ENCODE measurements at regions of chr14 and their contacts with region 1.

Region 1: DNA sequence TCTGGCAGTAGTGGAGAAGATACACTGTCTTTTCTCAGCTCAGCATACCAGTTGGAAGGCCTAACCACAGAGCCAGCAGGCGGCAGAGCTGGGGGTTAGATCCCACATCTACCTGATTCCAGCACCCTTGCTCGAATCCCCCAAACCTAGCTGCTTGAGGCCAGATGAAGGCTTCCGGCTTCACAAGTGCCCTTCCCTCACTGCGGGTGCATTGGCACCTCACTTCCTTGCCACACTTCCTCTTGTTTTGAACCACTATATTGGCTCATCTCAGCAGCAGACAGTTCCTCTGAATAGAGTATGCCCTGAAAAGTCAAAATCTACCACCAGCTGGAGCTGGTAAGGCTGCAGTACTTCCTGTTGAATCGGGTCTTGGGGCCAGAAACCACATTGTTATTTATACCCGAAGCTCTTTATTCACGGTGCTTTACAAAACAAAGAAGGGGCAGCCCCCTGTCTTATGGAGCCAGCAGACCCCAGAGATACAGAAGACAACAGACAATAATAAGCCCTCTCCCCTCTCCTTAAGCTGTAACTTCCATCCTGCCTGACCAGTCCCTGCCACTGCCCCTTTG is 233.7 kb downstream of the EFCAB11 start:
- DNase-seq: peak; percentile 89
- H3K4me3 Mint-ChIP-seq: peak overlapping the region; percentile 68
- H3K27ac Mint-ChIP-seq: peak overlapping the region; percentile 91
- H3K4me1 Mint-ChIP-seq: peaks cover 57% of the 10 kb centered on the region
- H3K27me3 Mint-ChIP-seq: no peaks in the 10 kb centered on the region

Region 2: DNA sequence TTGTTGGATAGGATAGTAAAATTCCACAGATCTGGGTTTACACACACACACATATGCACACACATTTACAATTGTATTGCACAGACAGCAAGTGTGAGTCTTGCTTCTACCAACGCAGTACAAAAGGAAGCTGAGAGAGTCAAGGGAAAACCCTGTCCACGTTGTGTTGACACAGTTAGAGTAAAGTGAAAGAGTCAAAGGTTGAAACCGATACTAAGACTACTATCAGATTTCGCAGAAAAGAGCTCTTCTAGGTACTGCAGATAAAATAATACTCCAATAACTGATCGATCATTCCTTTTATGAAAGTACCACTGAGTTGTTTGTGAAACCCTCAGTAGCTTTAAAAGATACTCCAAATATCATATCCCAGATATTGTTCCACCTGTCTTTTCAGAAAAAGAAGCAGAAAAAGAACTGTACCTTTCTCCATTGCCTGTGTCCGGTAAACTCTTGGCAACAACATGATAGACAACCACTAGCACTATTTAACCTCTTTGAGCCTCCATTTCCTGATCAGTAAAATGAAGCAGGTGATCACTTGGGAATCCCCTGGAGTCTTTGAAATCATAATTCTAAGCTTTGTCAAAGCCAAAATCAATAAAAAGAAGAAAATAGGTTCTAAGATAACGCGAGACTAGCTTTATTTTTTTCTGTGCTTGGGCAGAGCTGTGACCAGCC is 79.2 kb before region 1 on chr14:
- intact Hi-C with region 1: loop called (anchors 1 kb)
- DNase-seq: peak; percentile 86
- H3K4me3 Mint-ChIP-seq: peak overlapping the region; percentile 81
- H3K27ac Mint-ChIP-seq: peak overlapping the region; percentile 97
- H3K4me1 Mint-ChIP-seq: peaks cover 58% of the 10 kb centered on the region
- H3K27me3 Mint-ChIP-seq: no peaks in the 10 kb centered on the region

Region 3: GRCh38 chr14:89701211-89702043 is 19.4 kb before region 1 on chr14:
- intact Hi-C with region 1: loop called (anchors 1 kb)
- DNase-seq: peak; percentile 95
- H3K4me3 Mint-ChIP-seq: peak overlapping the region; percentile 76
- H3K27ac Mint-ChIP-seq: peak overlapping the region; percentile 88
- H3K4me1 Mint-ChIP-seq: peaks cover 34% of the 10 kb centered on the region
- H3K27me3 Mint-ChIP-seq: no peaks in the 10 kb centered on the region

Region 4: DNA sequence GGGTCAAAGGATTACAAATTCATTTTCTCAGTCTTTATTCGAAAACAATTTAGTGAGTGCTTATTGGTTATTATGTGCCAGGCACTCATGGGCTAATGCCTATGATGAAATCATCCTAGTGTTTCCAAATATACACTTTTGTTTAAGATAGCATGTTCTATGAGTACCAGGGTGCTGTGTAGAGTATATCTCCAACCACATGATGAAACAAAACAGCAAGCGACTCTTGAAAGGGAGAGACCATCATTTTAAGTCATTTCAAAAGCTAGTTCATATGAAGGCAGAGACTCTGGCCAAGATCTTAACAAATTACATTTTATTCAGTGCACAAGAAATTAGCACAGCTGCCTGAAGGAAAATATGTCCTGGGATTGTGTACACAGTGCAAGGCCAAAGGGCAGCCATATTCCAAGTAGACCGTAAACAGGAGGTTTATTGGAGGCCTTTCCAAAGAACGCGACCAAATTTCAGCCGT is 29.5 kb after region 1 on chr14:
- intact Hi-C with region 1: loop called (anchors 1 kb)
- DNase-seq: no peak
- H3K4me3 Mint-ChIP-seq: no peak overlapping the region
- H3K27ac Mint-ChIP-seq: peak overlapping the region; percentile 70
- H3K4me1 Mint-ChIP-seq: peaks cover 15% of the 10 kb centered on the region
- H3K27me3 Mint-ChIP-seq: no peaks in the 10 kb centered on the region

Region 5: GRCh38 chr14:89773644-89774316 is 53.0 kb after region 1 on chr14:
- intact Hi-C with region 1: loop called (anchors 5 kb)
- DNase-seq: peak; percentile 84
- H3K4me3 Mint-ChIP-seq: peak overlapping the region; percentile 60
- H3K27ac Mint-ChIP-seq: no peak overlapping the region
- H3K4me1 Mint-ChIP-seq: peaks cover 19% of the 10 kb centered on the region
- H3K27me3 Mint-ChIP-seq: peaks cover 20% of the 10 kb centered on the region

Region 6: GRCh38 chr14:90019824-90020523 is 299.1 kb after region 1 on chr14:
- intact Hi-C with region 1: no loop called
- DNase-seq: no peak
- H3K4me3 Mint-ChIP-seq: no peak overlapping the region
- H3K27ac Mint-ChIP-seq: peak overlapping the region; percentile 64
- H3K4me1 Mint-ChIP-seq: peaks cover 8% of the 10 kb centered on the region
- H3K27me3 Mint-ChIP-seq: no peaks in the 10 kb centered on the region